ENCODE measurements at regions of chr18 and their contacts with region 1.

Region 1: GRCh38 chr18:60826346-60826745 is 453.8 kb upstream of the MC4R start:
- DNase-seq: no peak
- ATAC-seq: peak; percentile 52; the same call in 1 of the 2 replicates
- H3K4me3 ChIP-seq: no peak overlapping the region
- H3K27ac ChIP-seq: no peak overlapping the region
- H3K4me1 ChIP-seq: no peaks in the 10 kb centered on the region
- H3K27me3 ChIP-seq: no peaks in the 10 kb centered on the region
- CTCF ChIP-seq: peak in 1 of 3 experiments; percentile 20; a peak in 2 of 6 replicates
- POLR2A ChIP-seq: no peak
- RAD21 ChIP-seq: no peak

Region 2: GRCh38 chr18:60391571-60392226 is 434.6 kb before region 1 on chr18:
- CTCF ChIA-PET with region 1: no interaction called
- POLR2A ChIA-PET with region 1: no interaction called
- RAD21 ChIA-PET with region 1: no interaction called
- intact Hi-C with region 1: no loop called
- DNase-seq: no peak
- ATAC-seq: no peak
- H3K4me3 ChIP-seq: no peak overlapping the region
- H3K27ac ChIP-seq: no peak overlapping the region
- H3K4me1 ChIP-seq: no peaks in the 10 kb centered on the region
- H3K27me3 ChIP-seq: no peaks in the 10 kb centered on the region
- CTCF ChIP-seq: no peak
- POLR2A ChIP-seq: no peak
- RAD21 ChIP-seq: no peak

Region 3: GRCh38 chr18:60684843-60685513 is 141.4 kb before region 1 on chr18:
- CTCF ChIA-PET with region 1: no interaction called
- POLR2A ChIA-PET with region 1: no interaction called
- RAD21 ChIA-PET with region 1: no interaction called
- intact Hi-C with region 1: no loop called
- DNase-seq: peak; percentile 19
- ATAC-seq: peak; percentile 71
- H3K4me3 ChIP-seq: no peak overlapping the region
- H3K27ac ChIP-seq: no peak overlapping the region
- H3K4me1 ChIP-seq: peaks cover 0 to 3% of the 10 kb centered on the region in 2 experiments; a peak in 1 of 4 replicates
- H3K27me3 ChIP-seq: peaks cover 3% of the 10 kb centered on the region; the same call in 1 of the 2 replicates
- CTCF ChIP-seq: peak; percentile 40 to 72 (median 51); a peak in 5 of 6 replicates
- POLR2A ChIP-seq: no peak
- RAD21 ChIP-seq: peak; percentile 76

Region 4: GRCh38 chr18:60794802-60795201 is 31.5 kb before region 1 on chr18:
- CTCF ChIA-PET with region 1: no interaction called
- POLR2A ChIA-PET with region 1: no interaction called
- RAD21 ChIA-PET with region 1: no interaction called
- intact Hi-C with region 1: loop called (anchors 5 kb)
- DNase-seq: no peak
- ATAC-seq: no peak
- H3K4me3 ChIP-seq: no peak overlapping the region
- H3K27ac ChIP-seq: no peak overlapping the region
- H3K4me1 ChIP-seq: no peaks in the 10 kb centered on the region
- H3K27me3 ChIP-seq: no peaks in the 10 kb centered on the region
- CTCF ChIP-seq: no peak
- POLR2A ChIP-seq: no peak
- RAD21 ChIP-seq: no peak

Region 5: GRCh38 chr18:61057443-61057842 is 231.1 kb after region 1 on chr18:
- CTCF ChIA-PET with region 1: no interaction called
- POLR2A ChIA-PET with region 1: no interaction called
- RAD21 ChIA-PET with region 1: no interaction called
- intact Hi-C with region 1: loop called (anchors 10 kb)
- DNase-seq: no peak
- ATAC-seq: no peak
- H3K4me3 ChIP-seq: no peak overlapping the region
- H3K27ac ChIP-seq: no peak overlapping the region
- H3K4me1 ChIP-seq: no peaks in the 10 kb centered on the region
- H3K27me3 ChIP-seq: 0 out of 2 replicates have a peak, but pooled peaks cover 3% of the 10 kb centered on the region
- CTCF ChIP-seq: no peak
- POLR2A ChIP-seq: no peak
- RAD21 ChIP-seq: no peak